CD4-positive, alpha-beta memory T cell (primary cell): ENCODE measurements at regions of chr6 and their contacts with region 1.

Region 1: DNA sequence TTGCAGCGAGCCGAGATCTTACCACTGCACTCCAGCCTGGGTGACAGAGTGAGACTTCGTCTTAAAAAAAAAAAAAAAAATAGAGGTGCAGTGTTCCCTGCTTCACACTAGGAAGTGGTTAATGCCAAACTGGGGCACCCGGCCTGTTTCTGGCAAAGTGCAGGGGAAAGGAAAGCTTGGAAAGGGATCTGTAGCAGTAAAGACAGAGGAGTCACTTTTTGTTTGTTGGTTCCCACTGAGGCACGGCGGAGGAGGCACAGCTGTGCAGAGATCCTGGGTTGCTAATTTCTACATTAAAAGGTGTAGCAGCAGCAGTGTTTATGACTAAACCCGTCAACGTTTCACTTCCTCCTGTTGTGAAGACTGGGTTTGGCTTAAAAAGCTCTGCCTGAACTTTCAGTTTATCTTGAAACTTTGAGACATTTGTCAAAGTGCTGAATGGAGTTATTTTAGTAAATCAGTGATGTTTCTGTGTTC is 125.6 kb downstream of the CARMIL1 start:
- DNase-seq: peak in 4 of 5 donors; percentile 37 to 58 (median 37)
- H3K4me3 ChIP-seq: peak overlapping the region; percentile 9 to 36
- H3K4me3 Mint-ChIP-seq: no peak overlapping the region
- H3K27ac ChIP-seq: peak overlapping the region; percentile 45
- H3K27ac Mint-ChIP-seq: no peak overlapping the region
- H3K4me1 ChIP-seq: peaks cover 35% of the 10 kb centered on the region
- H3K4me1 Mint-ChIP-seq: peaks cover 0 to 26% (median 13%) of the 10 kb centered on the region in 4 donors
- H3K27me3 ChIP-seq: no peaks in the 10 kb centered on the region
- H3K27me3 Mint-ChIP-seq: no peaks in the 10 kb centered on the region

Region 2: GRCh38 chr6:25122001-25122400 is 282.7 kb before region 1 on chr6:
- CTCF ChIA-PET with region 1: no interaction called
- POLR2A ChIA-PET with region 1: no interaction called
- intact Hi-C with region 1: no loop called
- DNase-seq: no peak
- H3K4me3 ChIP-seq: no peak overlapping the region
- H3K4me3 Mint-ChIP-seq: no peak overlapping the region
- H3K27ac ChIP-seq: no peak overlapping the region
- H3K27ac Mint-ChIP-seq: no peak overlapping the region
- H3K4me1 ChIP-seq: peaks cover 20% of the 10 kb centered on the region
- H3K4me1 Mint-ChIP-seq: peaks cover 23 to 42% (median 35%) of the 10 kb centered on the region in 4 donors
- H3K27me3 ChIP-seq: no peaks in the 10 kb centered on the region
- H3K27me3 Mint-ChIP-seq: no peaks in the 10 kb centered on the region

Region 3: DNA sequence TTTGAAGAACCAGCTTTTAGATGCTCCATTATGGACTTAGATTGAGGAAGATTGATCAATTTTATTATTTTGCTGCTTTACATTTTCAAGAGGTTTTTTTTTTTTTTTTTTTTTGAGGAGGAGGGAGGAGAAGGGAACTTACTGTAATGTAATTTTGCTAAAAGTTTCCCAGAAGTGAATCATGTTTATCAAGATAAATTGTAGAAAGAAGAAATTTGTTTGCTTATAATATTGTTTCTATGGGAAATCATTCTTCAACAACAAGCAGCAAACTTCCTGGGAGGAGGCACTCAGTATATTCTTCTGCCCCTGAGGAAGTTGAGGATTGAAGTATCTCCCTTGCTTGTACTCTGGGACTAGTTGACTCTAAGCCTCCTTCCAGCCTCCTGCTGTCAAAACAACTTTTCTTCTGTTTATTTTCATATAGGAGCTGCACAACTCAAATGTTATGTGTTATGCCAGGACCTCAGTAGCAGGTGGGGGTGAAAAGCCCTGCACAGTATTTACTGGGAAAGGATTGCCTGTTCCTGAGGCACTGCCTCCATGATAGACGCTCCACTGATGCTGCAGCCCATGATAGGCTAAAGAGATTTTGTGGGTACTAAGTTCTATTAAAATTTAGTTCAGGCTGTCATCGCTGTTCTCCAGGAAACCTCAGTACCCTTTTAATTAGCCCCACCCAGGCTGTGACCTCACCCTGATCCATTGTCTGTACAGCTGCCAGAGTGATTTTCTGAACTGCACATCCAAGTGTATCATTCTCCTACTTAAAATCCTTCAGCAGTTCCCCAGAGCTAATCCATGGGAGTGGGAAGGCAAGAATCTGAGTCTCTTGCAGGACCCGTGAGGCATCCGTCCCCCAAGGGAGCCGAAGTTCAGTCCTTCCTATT is 73.7 kb before region 1 on chr6:
- CTCF ChIA-PET with region 1: no interaction called
- POLR2A ChIA-PET with region 1: no interaction called
- intact Hi-C with region 1: no loop called
- DNase-seq: no peak
- H3K4me3 ChIP-seq: no peak overlapping the region
- H3K4me3 Mint-ChIP-seq: peak overlapping the region in 1 of 8 donors; percentile 23
- H3K27ac ChIP-seq: no peak overlapping the region
- H3K27ac Mint-ChIP-seq: peak overlapping the region in 1 of 7 donors; percentile 6
- H3K4me1 ChIP-seq: peaks cover 9% of the 10 kb centered on the region
- H3K4me1 Mint-ChIP-seq: peaks cover 5 to 44% (median 20%) of the 10 kb centered on the region in 4 donors
- H3K27me3 ChIP-seq: no peaks in the 10 kb centered on the region
- H3K27me3 Mint-ChIP-seq: no peaks in the 10 kb centered on the region

Region 4: GRCh38 chr6:25369433-25370181 is 35.1 kb before region 1 on chr6:
- CTCF ChIA-PET with region 1: interaction called, 7 read pairs
- POLR2A ChIA-PET with region 1: interaction called, 51 read pairs
- intact Hi-C with region 1: loop called (anchors 5 kb)
- DNase-seq: peak in 1 of 5 donors; percentile 34
- H3K4me3 ChIP-seq: peak overlapping the region; percentile 5 to 32
- H3K4me3 Mint-ChIP-seq: peak overlapping the region; percentile 57 to 88 (median 74)
- H3K27ac ChIP-seq: peak overlapping the region; percentile 28
- H3K27ac Mint-ChIP-seq: peak overlapping the region; percentile 56 to 97 (median 81)
- H3K4me1 ChIP-seq: peaks cover 49% of the 10 kb centered on the region
- H3K4me1 Mint-ChIP-seq: peaks cover 44 to 91% (median 66%) of the 10 kb centered on the region in 4 donors
- H3K27me3 ChIP-seq: no peaks in the 10 kb centered on the region
- H3K27me3 Mint-ChIP-seq: no peaks in the 10 kb centered on the region

Region 5: DNA sequence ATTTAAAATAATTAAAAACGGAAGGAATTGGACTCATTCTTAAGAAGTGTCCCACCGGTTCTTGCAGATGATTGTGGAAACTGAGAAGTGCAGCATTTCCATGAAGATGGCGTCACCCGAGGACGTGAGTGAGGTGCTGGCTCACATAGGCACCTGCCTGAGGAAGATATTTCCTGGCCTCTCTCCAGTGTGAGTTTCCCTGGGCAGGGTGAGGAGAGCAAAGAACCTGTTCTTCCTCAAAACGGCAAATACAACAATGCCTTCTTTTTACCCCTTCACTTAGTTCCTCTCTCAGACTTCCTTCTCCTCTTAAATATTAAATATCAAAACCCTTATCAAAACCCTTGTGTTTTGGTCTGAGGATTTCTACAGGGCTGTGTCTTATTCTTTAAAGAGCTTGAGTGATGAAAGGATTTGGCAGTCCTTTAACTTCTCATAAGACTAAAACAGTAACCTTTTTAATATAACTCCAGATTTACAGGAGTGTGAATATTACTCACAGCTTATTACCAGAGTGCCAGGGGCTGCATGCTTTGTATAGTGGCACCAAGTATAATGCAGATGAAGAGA is 30.8 kb after region 1 on chr6:
- CTCF ChIA-PET with region 1: interaction called, 3 read pairs
- POLR2A ChIA-PET with region 1: interaction called, 4 read pairs
- intact Hi-C with region 1: loop called (anchors 5 kb)
- DNase-seq: no peak
- H3K4me3 ChIP-seq: no peak overlapping the region
- H3K4me3 Mint-ChIP-seq: no peak overlapping the region
- H3K27ac ChIP-seq: no peak overlapping the region
- H3K27ac Mint-ChIP-seq: no peak overlapping the region
- H3K4me1 ChIP-seq: no peaks in the 10 kb centered on the region
- H3K4me1 Mint-ChIP-seq: no peaks in the 10 kb centered on the region
- H3K27me3 ChIP-seq: no peaks in the 10 kb centered on the region
- H3K27me3 Mint-ChIP-seq: peaks cover 0 to 1% of the 10 kb centered on the region in 2 donors